ENCODE measurements at regions of chr15 and their contacts with region 1.

Region 1: GRCh38 chr15:75104804-75105535 is 81.6 kb downstream of the PPCDC start:
- DNase-seq: peak; percentile 95
- H3K4me3 ChIP-seq: no peak overlapping the region
- H3K27ac ChIP-seq: peak overlapping the region; percentile 45
- H3K4me1 ChIP-seq: peaks cover 31% of the 10 kb centered on the region
- H3K27me3 ChIP-seq: peaks cover 3% of the 10 kb centered on the region
- CTCF ChIP-seq: peak in 1 of 2 donors; percentile 5

Region 2: GRCh38 chr15:75042730-75043508 is 62.1 kb before region 1 on chr15:
- CTCF ChIA-PET with region 1: interaction called, 10 read pairs
- dilution Hi-C with region 1: no loop called
- in situ Hi-C with region 1: no loop called
- intact Hi-C with region 1: no loop called
- DNase-seq: peak; percentile 15
- H3K4me3 ChIP-seq: no peak overlapping the region
- H3K27ac ChIP-seq: no peak overlapping the region
- H3K4me1 ChIP-seq: peaks cover 27% of the 10 kb centered on the region
- H3K27me3 ChIP-seq: no peaks in the 10 kb centered on the region
- CTCF ChIP-seq: peak; percentile 17 to 48

Region 3: DNA sequence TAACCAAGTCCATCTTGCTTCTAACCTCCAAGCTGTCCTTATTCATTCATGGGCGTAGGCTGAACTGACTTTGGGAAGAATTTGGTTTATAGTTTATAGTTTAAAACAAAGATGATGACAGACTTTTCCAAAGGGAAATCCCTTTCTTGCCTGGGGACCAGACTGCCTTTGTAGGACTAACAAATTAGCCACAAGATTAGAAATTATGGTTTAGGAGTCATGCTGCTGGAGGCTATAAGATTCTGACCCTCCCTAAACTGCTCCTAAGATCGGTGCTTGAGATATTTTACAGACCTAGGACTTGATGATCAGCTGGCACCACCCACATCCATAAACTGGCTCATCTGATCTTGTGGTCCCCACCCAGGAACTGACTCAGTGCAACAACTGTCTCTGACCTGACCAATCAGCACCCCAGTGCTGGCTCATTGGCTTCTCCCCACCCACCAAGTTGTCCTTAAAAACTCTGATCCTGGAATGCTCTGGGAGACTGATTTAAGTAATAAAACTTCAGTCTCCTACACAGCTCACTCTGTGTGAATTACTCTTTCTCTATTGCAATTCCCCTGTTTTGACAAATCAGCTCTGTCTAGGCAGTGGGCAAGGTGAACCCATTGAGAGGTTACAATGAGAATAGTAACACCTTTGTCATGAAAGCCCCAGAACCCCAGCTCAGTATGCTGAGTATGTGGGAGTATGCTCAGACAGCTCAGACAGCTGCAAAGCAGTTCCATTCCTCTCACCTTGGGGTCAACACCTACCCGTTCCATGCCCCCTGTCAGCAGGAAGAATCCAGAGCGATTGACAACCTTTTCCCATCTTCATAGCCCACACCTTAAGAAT is 45.1 kb after region 1 on chr15:
- CTCF ChIA-PET with region 1: no interaction called
- dilution Hi-C with region 1: no loop called
- in situ Hi-C with region 1: no loop called
- intact Hi-C with region 1: loop called (anchors 2 kb)
- DNase-seq: peak; percentile 98
- H3K4me3 ChIP-seq: no peak overlapping the region
- H3K27ac ChIP-seq: peak overlapping the region; percentile 70
- H3K4me1 ChIP-seq: peaks cover 19% of the 10 kb centered on the region
- H3K27me3 ChIP-seq: no peaks in the 10 kb centered on the region
- CTCF ChIP-seq: no peak

Measured in mammary epithelial cell (primary cell).